Activated B cell treated with CpG ODN at 0.5 μM for 24 hours (primary cell): ENCODE measurements at regions of chr16 and their contacts with region 1.

Region 1: DNA sequence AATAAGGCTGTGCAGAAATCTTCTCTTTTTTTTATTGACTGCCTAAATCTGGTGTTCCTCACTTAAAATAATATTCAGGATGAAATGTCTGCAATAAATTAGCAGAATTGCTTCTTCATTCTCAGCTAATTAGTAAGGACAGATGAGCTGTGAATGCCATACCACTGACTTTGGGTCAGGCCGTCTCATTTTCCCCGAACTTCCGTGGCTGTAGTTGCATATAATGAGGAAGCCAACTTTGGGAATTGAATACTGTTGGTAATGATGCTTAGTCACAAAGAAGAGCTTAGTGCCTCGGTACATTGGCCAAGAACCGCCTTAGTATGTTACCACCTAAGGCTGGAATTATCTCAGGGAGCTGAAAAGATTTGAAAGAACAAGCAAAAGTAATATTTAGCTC is 47.6 kb downstream of the NUP93 start:
- DNase-seq: no peak
- ATAC-seq: no peak
- H3K4me3 Mint-ChIP-seq: no peak overlapping the region
- H3K27ac Mint-ChIP-seq: no peak overlapping the region
- H3K4me1 Mint-ChIP-seq: no peaks in the 10 kb centered on the region
- H3K27me3 Mint-ChIP-seq: no peaks in the 10 kb centered on the region
- CTCF ChIP-seq: no peak

Region 2: DNA sequence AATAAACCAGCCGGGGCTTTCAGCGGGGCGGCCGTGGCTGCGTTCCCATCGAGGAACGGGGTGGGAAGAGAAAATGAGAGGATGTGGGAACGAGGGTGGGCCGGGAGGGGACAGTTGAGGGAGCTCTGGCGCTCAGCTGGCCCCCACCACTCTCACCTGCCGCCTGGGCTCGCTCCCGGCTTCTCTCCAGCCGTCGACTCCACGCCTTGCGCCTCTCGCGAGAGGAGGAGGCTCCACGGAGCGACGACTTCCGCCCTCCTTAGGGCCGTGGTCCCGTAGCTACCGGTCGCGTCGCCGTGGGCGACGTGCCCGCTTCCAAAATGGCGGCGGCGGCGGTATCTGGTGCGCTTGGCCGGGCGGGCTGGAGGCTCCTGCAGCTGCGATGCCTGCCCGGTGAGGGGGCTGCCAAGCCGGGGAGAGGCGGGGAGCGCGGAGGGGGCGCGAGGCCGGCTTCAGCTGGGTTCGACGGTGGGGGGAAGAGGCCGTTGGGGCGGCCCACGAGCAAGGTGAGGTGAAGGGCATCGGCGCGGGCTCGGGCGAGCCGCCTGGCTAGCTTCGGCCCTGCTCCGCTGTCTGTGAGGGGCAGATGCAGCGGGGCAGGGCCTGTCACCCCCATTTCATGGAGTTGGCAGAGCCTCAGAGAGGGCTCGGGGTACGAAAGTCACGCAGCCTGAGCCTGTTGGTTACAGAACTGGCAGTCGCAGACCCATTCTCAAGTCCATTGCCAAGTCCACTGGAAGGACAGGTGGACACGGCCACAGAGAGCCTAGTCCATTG is 669.9 kb after region 1 on chr16 and contains the starts of genes CIAPIN1 and COQ9:
- CTCF ChIA-PET with region 1: no interaction called
- POLR2A ChIA-PET with region 1: interaction called, 12 read pairs
- intact Hi-C with region 1: no loop called
- DNase-seq: peak; percentile 82
- ATAC-seq: peak; percentile 98
- H3K4me3 Mint-ChIP-seq: peak within 1 kb of the TSS; percentile 91
- H3K27ac Mint-ChIP-seq: peak within 1 kb of the TSS; percentile 84
- H3K4me1 Mint-ChIP-seq: peaks cover 19% of the 10 kb centered on the region
- H3K27me3 Mint-ChIP-seq: no peaks in the 10 kb centered on the region
- CTCF ChIP-seq: no peak
- total RNA-seq, gene CIAPIN1: 47.1 and 52.3 TPM in 2 replicates
- total RNA-seq, gene COQ9: 30.4 and 34.1 TPM in 2 replicates